Left lung (tissue), 14 donors: ENCODE measurements at regions of chr5 and their contacts with region 1.

Region 1: DNA sequence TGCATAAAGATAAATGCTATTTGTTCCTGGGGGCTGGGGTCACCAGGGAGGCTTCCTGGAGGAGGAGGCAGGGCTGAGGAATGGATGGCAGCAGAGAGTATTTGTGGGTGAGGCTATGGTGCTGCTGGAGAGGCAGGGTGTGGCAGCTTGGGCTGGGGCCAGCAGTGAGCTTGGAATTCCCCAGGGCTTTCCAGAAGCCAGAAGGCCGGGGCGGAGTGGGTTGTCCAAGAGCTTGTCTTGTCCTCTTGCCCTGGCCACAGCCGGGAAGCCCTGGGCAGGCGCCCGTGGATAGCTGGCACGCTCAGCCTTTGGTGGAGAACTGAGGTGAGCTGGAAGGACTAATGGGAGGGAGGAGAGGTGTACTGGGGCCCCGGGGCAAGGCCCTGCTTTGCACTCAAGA is 27.1 kb upstream of the CNOT6 start:
- DNase-seq: peak in 2 of 4 donors; percentile 82 to 92
- ATAC-seq: peak; percentile 86
- H3K4me3 ChIP-seq: peak overlapping the region in 1 of 2 donors; percentile 32
- H3K27ac ChIP-seq: peak overlapping the region in 1 of 2 donors; percentile 64
- H3K4me1 ChIP-seq: peaks cover 0 to 17% of the 10 kb centered on the region in 2 donors
- H3K27me3 ChIP-seq: peaks cover 0 to 5% of the 10 kb centered on the region in 2 donors
- CTCF ChIP-seq: no peak

Region 2: DNA sequence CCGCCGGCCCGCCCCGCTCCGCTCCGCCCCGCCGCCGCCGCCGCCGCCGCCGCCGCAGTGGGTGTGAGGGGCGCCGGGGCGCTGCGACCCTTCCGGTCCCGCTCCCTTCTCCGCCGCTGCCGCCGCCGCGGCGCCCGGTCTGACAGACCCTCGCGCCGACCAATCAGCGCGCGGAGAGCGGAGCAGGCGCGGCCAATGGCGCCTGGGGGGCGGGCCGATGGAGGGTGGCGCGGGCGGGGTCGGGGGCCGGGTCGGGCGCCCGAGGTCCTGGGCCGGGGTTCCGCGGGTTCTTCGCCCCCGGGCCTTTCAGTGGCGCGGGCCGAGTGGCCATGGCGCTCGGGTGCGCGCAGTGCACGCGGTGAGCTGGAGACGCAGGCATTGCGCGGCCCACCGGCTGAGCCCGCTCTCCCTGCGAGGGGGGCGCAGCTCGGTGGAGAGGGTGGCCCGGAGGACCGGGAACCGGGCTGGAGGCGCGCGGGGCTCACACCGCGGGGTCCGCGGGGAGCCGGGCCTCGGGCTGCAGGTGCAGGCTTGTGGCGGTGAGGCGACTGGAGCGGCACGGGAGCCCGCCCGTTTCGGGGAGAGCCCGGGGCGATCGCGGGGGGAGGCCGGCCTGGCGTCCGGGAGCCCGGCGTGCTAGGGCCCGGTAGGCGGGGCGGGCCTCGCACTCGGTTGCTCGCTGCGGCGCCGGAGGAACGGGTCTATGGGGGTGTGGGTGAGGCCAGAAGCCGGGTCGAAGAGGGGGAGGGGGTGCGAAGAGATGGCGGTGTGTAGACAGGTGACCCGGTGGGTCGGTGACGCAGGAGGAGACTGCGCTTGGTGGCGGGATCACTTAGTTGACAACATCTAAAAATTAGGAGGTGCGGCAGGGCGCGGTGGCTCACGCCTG is 174.9 kb before region 1 on chr5 and contains the start of gene MAPK9:
- intact Hi-C with region 1: loop called in 1 of 2 experiments (anchors 5 kb)
- DNase-seq: peak; percentile 81 to 93 (median 88)
- ATAC-seq: peak; percentile 86
- H3K4me3 ChIP-seq: peak within 1 kb of the TSS; percentile 96 to 98
- H3K27ac ChIP-seq: peak within 1 kb of the TSS; percentile 84 to 91
- H3K4me1 ChIP-seq: peaks cover 16 to 33% of the 10 kb centered on the region in 2 donors
- H3K27me3 ChIP-seq: no peaks in the 10 kb centered on the region
- CTCF ChIP-seq: no peak
- polyA plus RNA-seq, gene MAPK9: 36.2 to 42.5 (median 37.9) TPM